Testis (tissue), 5 donors: ENCODE measurements at regions of chr3 and their contacts with region 1.

Region 1: GRCh38 chr3:194204042-194204987 is 68.4 kb downstream of the HES1 start:
- DNase-seq: peak; percentile 27
- H3K4me3 ChIP-seq: peak overlapping the region; percentile 50 to 51
- H3K27ac ChIP-seq: no peak overlapping the region
- H3K4me1 ChIP-seq: peaks cover 3% of the 10 kb centered on the region
- H3K27me3 ChIP-seq: no peaks in the 10 kb centered on the region
- CTCF ChIP-seq: no peak
- POLR2A ChIP-seq: no peak

Region 2: GRCh38 chr3:194696475-194697091 is 492.3 kb after region 1 on chr3:
- intact Hi-C with region 1: loop called (anchors 5 kb)
- DNase-seq: no peak
- H3K4me3 ChIP-seq: no peak overlapping the region
- H3K27ac ChIP-seq: no peak overlapping the region
- H3K4me1 ChIP-seq: peaks cover 11% of the 10 kb centered on the region
- H3K27me3 ChIP-seq: no peaks in the 10 kb centered on the region
- CTCF ChIP-seq: no peak
- POLR2A ChIP-seq: no peak